Ascending aorta (tissue), 2 donors: ENCODE measurements at regions of chr13 and their contacts with region 1.

Region 1: GRCh38 chr13:113208424-113209335 is at the start of gene PCID2:
- DNase-seq: peak; percentile 60 to 93
- H3K4me3 ChIP-seq: peak within 1 kb of the TSS; percentile 98 to 99
- H3K27ac ChIP-seq: peak within 1 kb of the TSS; percentile 98
- H3K4me1 ChIP-seq: peaks cover 3 to 51% of the 10 kb centered on the region in 2 donors
- H3K27me3 ChIP-seq: no peaks in the 10 kb centered on the region
- CTCF ChIP-seq: no peak
- total RNA-seq, gene PCID2: 50.8 TPM

Region 2: GRCh38 chr13:112689303-112690165 is 519.1 kb before region 1 on chr13 and contains the start of gene ATP11A:
- intact Hi-C with region 1: loop called (anchors 5 kb)
- DNase-seq: peak; percentile 51 to 94
- H3K4me3 ChIP-seq: peak within 1 kb of the TSS; percentile 86 to 89
- H3K27ac ChIP-seq: peak within 1 kb of the TSS; percentile 83 to 93
- H3K4me1 ChIP-seq: peaks cover 0 to 13% of the 10 kb centered on the region in 2 donors
- H3K27me3 ChIP-seq: no peaks in the 10 kb centered on the region
- CTCF ChIP-seq: no peak
- total RNA-seq, gene ATP11A: 50.1 TPM

Region 3: DNA sequence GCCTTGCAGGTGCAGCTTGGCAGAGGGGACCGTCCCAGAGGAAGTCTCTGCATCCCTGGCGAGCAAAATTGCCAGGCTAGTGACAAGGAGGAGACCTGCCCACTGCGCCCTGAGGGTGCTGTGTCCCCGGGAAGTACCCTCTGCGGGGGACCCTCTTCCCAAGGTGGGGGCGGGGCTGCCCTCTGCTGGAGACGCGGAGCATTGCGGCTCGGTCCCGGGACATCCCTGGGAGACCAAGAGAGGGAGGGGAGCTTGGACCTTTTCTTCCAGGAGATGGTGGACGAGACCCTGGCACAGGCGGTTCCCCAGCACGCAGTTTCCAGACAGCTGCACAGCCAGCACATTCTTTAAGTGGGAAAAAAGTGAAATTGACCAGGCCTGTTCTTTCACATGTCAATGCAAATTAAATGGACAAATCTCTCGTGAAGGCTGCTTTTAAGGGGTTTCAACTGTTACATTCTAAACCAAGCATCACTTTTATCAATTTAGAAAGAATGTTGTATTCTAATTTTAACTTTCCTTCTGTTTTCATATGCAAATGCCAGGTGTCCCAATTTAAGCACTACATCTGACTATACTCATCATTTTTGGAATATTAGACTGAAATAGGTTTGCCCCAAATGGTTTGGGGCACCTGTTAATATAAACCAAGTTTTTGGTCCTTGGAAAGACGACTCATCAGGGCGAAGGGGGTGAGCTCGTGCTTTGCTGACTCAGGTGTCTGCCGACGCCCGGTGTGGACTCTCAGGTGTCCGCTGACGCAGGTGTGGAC is 179.0 kb before region 1 on chr13:
- intact Hi-C with region 1: loop called (anchors 10 kb)
- DNase-seq: no peak
- H3K4me3 ChIP-seq: no peak overlapping the region
- H3K27ac ChIP-seq: no peak overlapping the region
- H3K4me1 ChIP-seq: no peaks in the 10 kb centered on the region
- H3K27me3 ChIP-seq: no peaks in the 10 kb centered on the region
- CTCF ChIP-seq: peak in 2 of 3 experiments; percentile 30 to 55

Region 4: GRCh38 chr13:113283904-113284303 is 75.2 kb after region 1 on chr13:
- intact Hi-C with region 1: no loop called
- DNase-seq: no peak
- H3K4me3 ChIP-seq: no peak overlapping the region
- H3K27ac ChIP-seq: no peak overlapping the region
- H3K4me1 ChIP-seq: no peaks in the 10 kb centered on the region
- H3K27me3 ChIP-seq: no peaks in the 10 kb centered on the region
- CTCF ChIP-seq: no peak

Region 5: GRCh38 chr13:113296842-113297369 is 88.2 kb after region 1 on chr13 and contains the start of gene LAMP1:
- intact Hi-C with region 1: loop called (anchors 1 kb)
- DNase-seq: peak; percentile 91 to 100
- H3K4me3 ChIP-seq: peak within 1 kb of the TSS; percentile 93 to 95
- H3K27ac ChIP-seq: peak within 1 kb of the TSS; percentile 67 to 73
- H3K4me1 ChIP-seq: peaks cover 0 to 7% of the 10 kb centered on the region in 2 donors
- H3K27me3 ChIP-seq: no peaks in the 10 kb centered on the region
- CTCF ChIP-seq: peak in 1 of 3 experiments; percentile 25
- total RNA-seq, gene LAMP1: 126 TPM

Region 6: GRCh38 chr13:113410472-113411201 is 202.0 kb after region 1 on chr13:
- intact Hi-C with region 1: loop called (anchors 5 kb)
- DNase-seq: peak; percentile 35 to 92
- H3K4me3 ChIP-seq: peak overlapping the region in 1 of 2 donors; percentile 31
- H3K27ac ChIP-seq: peak overlapping the region; percentile 84 to 97
- H3K4me1 ChIP-seq: peaks cover 15 to 39% of the 10 kb centered on the region in 2 donors
- H3K27me3 ChIP-seq: no peaks in the 10 kb centered on the region
- CTCF ChIP-seq: no peak

Region 7: DNA sequence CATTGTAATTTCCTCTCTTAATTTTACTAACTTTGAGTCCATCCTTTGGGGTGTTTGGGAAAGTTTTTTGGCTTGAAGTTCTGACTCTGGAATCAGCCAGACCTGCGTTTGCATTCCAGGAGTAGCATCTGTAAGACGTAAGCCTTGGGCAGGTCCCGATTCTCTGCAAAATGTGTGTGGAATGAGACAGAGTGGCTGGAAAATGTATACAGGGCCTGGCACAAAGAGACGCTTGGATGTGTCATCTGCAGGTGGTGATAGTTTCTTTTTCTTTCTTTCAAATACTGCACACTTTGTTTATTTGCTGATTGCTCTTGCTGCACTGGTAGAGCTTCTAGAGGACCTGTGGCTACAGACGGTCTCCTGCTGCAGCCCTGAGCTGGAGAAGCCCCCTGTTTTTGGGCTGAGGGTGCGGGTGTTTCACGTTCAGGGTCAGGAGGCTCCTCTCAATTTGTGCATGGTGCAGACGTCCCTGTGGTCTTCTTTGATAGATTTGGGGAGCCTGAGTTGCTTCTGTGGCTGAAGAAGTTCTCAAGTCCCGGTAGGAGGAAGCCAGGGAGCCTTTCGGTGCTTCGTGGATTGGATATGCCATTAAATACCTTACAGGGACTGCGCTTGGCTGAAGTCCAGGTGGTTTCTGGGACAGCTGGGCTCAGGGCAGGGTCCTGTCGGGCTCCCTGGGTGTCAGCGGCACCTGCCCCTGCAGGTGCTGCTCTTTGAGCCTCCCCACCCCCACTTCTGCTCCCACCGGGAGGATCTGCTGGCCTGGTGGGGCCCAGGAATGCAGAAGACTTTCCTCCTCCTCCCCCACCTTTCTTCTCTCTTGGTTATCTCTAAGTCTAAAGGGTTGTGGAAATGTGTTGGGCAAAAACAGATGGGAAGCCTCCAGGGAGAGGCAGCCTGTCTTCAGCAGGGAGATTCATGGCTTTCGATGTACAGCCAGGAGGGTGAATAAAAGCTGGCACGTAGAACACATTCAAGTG is 699.2 kb after region 1 on chr13:
- intact Hi-C with region 1: no loop called
- DNase-seq: peak in 1 of 2 donors; percentile 60
- H3K4me3 ChIP-seq: no peak overlapping the region
- H3K27ac ChIP-seq: no peak overlapping the region
- H3K4me1 ChIP-seq: peaks cover 7 to 21% of the 10 kb centered on the region in 2 donors
- H3K27me3 ChIP-seq: no peaks in the 10 kb centered on the region
- CTCF ChIP-seq: no peak

Region 8: DNA sequence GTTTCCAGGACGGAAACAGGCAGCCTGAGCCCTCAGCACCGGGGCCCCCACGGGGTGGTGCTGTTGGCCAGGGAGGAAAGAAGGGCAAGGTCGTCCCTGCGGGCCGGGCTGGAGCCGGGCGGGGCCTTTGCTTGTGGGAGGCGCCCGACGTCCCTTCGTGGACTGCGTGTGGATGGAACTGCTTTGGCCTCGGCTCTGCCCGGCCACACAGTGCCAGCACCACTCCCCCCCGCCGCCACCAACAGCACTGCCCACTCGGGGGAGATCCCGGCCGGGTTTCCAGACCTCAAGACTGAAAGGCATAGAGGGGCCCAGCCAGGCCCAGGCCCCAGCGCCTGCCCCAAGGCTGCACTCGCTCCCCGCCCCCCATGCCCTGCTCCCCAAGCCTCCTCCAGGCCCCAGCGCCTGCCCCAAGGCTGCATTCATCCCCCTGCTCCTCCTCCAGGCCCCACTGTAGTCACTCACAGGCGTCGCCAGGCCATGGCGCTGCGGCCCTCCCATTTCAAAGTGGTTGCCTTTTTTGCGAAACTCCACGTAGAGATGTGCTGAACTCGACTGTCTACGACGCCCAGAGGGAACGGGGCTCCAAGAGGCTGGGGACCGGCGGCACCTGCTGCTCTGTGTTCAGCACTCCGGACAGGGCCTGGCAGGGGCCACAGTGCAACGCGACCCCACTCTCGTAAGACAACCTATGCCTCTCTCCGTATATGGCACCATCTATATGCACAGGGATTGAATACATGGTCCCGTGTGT is 742.7 kb after region 1 on chr13:
- intact Hi-C with region 1: no loop called
- DNase-seq: peak; percentile 30 to 92
- H3K4me3 ChIP-seq: peak overlapping the region in 1 of 2 donors; percentile 41
- H3K27ac ChIP-seq: no peak overlapping the region
- H3K4me1 ChIP-seq: peaks cover 3 to 8% of the 10 kb centered on the region in 2 donors
- H3K27me3 ChIP-seq: no peaks in the 10 kb centered on the region
- CTCF ChIP-seq: peak; percentile 89 to 93 (median 91)

Region 9: GRCh38 chr13:114065141-114065925 is 856.7 kb after region 1 on chr13:
- intact Hi-C with region 1: loop called (anchors 5 kb)
- DNase-seq: peak; percentile 79 to 95
- H3K4me3 ChIP-seq: peak overlapping the region; percentile 44 to 62
- H3K27ac ChIP-seq: peak overlapping the region; percentile 98 to 99
- H3K4me1 ChIP-seq: peaks cover 40 to 64% of the 10 kb centered on the region in 2 donors
- H3K27me3 ChIP-seq: no peaks in the 10 kb centered on the region
- CTCF ChIP-seq: no peak